Naive thymus-derived CD4-positive, alpha-beta T cell (primary cell): ENCODE measurements at regions of chr3 and their contacts with region 1.

Region 1: DNA sequence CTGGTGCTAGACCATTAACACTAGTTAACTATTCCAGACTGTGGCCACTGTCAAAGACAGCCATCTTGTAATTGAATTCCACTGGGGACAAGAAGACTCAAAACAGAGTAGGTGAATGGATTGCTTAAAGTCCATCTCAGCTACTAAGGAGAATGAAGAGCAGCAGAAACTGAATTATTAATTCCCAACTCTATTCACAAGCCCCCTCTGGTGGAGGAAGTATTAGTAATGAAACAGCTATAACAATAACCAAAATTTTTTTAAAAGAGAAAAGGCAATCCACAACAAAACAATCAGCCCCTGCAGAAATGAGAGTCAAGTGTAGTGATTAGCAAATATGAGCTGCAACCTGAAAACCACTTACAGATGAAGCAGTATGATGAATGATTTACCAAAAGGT is 302.8 kb downstream of the FHIT start:
- DNase-seq: peak in 3 of 9 donors; percentile 7 to 16 (median 11)
- ATAC-seq: no peak
- H3K4me3 ChIP-seq: no peak overlapping the region
- H3K4me3 Mint-ChIP-seq: no peak overlapping the region
- H3K27ac ChIP-seq: no peak overlapping the region
- H3K27ac Mint-ChIP-seq: peak overlapping the region in 1 of 9 donors; percentile 53
- H3K4me1 ChIP-seq: no peaks in the 10 kb centered on the region
- H3K4me1 Mint-ChIP-seq: peaks cover 0 to 5% (median 0%) of the 10 kb centered on the region in 7 donors
- H3K27me3 ChIP-seq: no peaks in the 10 kb centered on the region
- H3K27me3 Mint-ChIP-seq: no peaks in the 10 kb centered on the region

Region 2: DNA sequence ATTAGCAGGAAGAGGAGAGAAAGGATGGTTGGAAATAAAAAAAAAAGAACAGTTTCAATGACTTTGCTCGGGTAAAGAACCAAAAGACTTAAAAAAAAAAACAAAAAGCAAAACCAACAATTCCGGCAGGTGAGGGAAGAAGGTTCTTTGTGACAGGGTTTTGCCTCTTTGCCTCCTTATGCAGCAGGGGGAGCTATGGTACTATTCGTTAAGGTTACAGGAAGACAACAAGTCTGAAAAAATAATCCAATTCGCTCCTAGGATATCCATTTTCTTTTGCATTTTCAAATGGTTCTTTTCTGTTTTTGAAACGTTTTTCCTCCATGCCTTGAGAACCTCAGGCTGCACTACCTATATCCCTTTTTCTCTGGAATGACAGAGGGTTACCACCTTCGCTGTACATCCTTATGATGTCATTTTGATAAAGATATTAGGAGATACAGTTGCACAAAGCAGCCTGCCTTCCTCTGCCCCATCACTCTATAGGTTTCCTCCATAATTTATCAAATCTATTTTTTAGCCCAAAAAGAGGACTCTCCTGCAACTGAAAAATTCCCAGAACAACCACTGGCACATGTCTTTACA is 1953.6 kb before region 1 on chr3:
- CTCF ChIA-PET with region 1: no interaction called
- POLR2A ChIA-PET with region 1: no interaction called
- intact Hi-C with region 1: loop called in 1 of 2 experiments (anchors 10 kb)
- DNase-seq: peak in 7 of 9 donors; percentile 20 to 58 (median 47)
- ATAC-seq: peak; percentile 65
- H3K4me3 ChIP-seq: no peak overlapping the region
- H3K4me3 Mint-ChIP-seq: no peak overlapping the region
- H3K27ac ChIP-seq: no peak overlapping the region
- H3K27ac Mint-ChIP-seq: no peak overlapping the region
- H3K4me1 ChIP-seq: no peaks in the 10 kb centered on the region
- H3K4me1 Mint-ChIP-seq: peaks cover 0 to 4% (median 0%) of the 10 kb centered on the region in 7 donors
- H3K27me3 ChIP-seq: peaks cover 0 to 3% of the 10 kb centered on the region in 2 donors
- H3K27me3 Mint-ChIP-seq: peaks cover 4 to 16% (median 7%) of the 10 kb centered on the region in 5 donors

Region 3: DNA sequence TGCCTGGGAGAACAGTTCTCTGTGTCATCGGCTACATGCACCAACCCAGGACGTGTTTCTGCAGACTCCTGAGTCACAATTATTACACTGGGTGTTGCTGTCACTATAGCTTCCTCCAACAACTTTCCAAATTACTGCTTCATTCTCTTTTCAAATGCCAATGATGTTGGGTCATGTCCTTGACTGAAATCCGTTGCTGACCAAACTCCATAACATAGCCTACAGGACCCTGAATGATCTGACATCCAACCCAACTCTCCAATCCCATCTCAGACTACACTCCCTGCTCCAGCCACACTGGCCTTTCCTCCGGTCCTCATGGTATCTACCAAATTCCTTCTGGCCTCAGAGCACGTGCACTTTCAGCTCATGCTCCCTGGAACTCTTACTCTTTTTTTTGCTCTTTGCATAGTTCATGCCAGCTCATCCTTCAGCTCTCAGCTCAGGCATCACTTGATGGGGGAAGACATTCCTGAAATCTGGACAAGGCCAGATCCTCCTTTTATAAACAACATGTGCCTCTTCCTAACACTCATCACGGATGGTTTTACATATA is 504.1 kb after region 1 on chr3:
- CTCF ChIA-PET with region 1: no interaction called
- POLR2A ChIA-PET with region 1: no interaction called
- intact Hi-C with region 1: no loop called
- DNase-seq: no peak
- ATAC-seq: no peak
- H3K4me3 ChIP-seq: no peak overlapping the region
- H3K4me3 Mint-ChIP-seq: no peak overlapping the region
- H3K27ac ChIP-seq: no peak overlapping the region
- H3K27ac Mint-ChIP-seq: no peak overlapping the region
- H3K4me1 ChIP-seq: no peaks in the 10 kb centered on the region
- H3K4me1 Mint-ChIP-seq: no peaks in the 10 kb centered on the region
- H3K27me3 ChIP-seq: no peaks in the 10 kb centered on the region
- H3K27me3 Mint-ChIP-seq: peaks cover 2 to 9% (median 4%) of the 10 kb centered on the region in 5 donors

Region 4: DNA sequence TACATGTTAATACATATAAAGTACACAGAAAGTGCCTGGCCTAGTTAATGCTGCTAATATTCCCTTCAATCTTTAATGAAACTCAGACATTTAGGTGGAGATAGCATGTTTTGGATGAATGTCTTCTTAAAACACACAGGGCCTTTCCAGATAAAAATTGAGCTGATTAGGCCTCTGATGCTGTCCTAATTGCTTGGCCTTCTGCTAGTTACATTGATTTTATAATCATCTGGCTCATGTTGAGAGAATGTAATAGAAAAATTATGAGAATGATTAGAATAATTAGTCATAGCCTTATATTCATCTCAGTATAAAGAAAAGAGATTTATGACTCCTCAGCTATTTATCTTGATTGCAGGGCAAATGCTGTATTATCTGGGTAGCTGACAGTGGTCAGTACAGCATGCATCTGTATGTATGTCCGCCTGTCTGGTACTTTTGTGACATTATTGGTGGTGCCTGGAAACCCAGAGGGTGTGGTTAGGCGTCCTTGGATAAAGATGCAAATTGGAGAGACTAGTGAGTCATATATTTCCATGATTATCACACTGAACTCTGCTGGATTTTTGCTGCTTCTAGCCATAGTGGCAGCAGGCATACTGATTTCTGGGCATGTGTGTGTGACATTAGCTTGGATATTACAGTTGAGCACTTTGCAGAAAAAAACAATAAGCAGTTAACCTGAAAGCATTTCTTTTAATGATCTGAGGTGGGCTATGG is 1304.1 kb after region 1 on chr3:
- CTCF ChIA-PET with region 1: no interaction called
- POLR2A ChIA-PET with region 1: no interaction called
- intact Hi-C with region 1: no loop called
- DNase-seq: no peak
- ATAC-seq: no peak
- H3K4me3 ChIP-seq: no peak overlapping the region
- H3K4me3 Mint-ChIP-seq: no peak overlapping the region
- H3K27ac ChIP-seq: no peak overlapping the region
- H3K27ac Mint-ChIP-seq: no peak overlapping the region
- H3K4me1 ChIP-seq: no peaks in the 10 kb centered on the region
- H3K4me1 Mint-ChIP-seq: no peaks in the 10 kb centered on the region
- H3K27me3 ChIP-seq: no peaks in the 10 kb centered on the region
- H3K27me3 Mint-ChIP-seq: peaks cover 0 to 18% (median 9%) of the 10 kb centered on the region in 5 donors